Esophagus muscularis mucosa (tissue), 4 donors: ENCODE measurements at regions of chr17 and their contacts with region 1.

Region 1: GRCh38 chr17:50087246-50087911 is 7.8 kb upstream of the PDK2 start:
- DNase-seq: no peak
- H3K4me3 ChIP-seq: no peak overlapping the region
- H3K27ac ChIP-seq: no peak overlapping the region
- H3K4me1 ChIP-seq: peaks cover 0 to 5% (median 0%) of the 10 kb centered on the region in 4 donors
- H3K27me3 ChIP-seq: no peaks in the 10 kb centered on the region
- CTCF ChIP-seq: peak; percentile 94 to 100 (median 96)
- EP300 ChIP-seq: no peak
- POLR2A ChIP-seq: no peak

Region 2: GRCh38 chr17:50026901-50027630 is 60.3 kb before region 1 on chr17:
- intact Hi-C with region 1: loop called (anchors 1 kb)
- DNase-seq: peak; percentile 97
- H3K4me3 ChIP-seq: peak overlapping the region; percentile 40 to 49 (median 46)
- H3K27ac ChIP-seq: peak overlapping the region; percentile 2 to 60 (median 33)
- H3K4me1 ChIP-seq: peaks cover 19 to 22% (median 20%) of the 10 kb centered on the region in 4 donors
- H3K27me3 ChIP-seq: no peaks in the 10 kb centered on the region
- CTCF ChIP-seq: peak; percentile 97 to 98 (median 98)
- EP300 ChIP-seq: no peak
- POLR2A ChIP-seq: no peak